ENCODE measurements at regions of chr5 and their contacts with region 1.

Region 1: DNA sequence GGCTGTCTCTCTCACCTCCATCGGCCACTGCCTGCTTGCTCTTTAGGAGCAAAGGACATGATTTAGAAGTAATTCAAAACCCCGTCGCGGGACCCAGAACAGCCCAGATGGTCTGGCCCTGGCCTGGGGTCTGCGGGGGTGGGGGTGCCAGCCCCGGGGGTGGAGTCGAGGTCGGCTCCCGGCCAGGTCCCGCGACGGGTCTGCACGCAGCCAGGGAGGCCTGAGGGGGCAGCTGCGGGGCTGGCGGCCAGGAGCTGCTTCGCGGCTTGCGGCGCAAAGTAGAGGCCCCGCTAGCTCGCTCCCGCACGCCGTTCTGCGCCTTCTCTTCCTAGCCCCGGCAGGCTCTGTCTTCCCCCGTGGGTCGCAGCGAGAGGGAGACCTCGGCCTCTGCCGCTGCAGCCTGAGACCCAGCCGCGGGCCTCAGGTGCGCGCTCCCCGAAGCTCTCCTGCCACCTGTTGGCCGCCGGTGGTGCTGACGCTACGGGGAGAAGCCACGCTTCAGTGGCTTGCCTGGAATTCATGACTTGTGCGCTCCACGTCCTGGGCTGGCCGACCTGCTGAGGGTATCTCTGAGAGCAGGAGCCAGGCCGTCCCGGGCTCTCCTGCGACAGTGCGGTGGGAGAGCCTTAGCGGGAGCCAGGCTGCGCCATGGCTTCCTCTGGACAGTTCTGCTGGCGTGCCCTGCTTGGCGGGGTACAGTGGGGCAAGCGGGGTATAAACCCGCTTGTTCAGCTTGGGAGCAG is 157.2 kb upstream of the PITX1 start:
- DNase-seq: peak; percentile 73
- H3K4me3 ChIP-seq: peak overlapping the region; percentile 26 to 28
- H3K27ac ChIP-seq: peak overlapping the region; percentile 28 to 69
- H3K4me1 ChIP-seq: no peaks in the 10 kb centered on the region
- H3K27me3 ChIP-seq: no peaks in the 10 kb centered on the region
- CTCF ChIP-seq: peak; percentile 74 to 96 (median 88)
- POLR2A ChIP-seq: no peak

Region 2: DNA sequence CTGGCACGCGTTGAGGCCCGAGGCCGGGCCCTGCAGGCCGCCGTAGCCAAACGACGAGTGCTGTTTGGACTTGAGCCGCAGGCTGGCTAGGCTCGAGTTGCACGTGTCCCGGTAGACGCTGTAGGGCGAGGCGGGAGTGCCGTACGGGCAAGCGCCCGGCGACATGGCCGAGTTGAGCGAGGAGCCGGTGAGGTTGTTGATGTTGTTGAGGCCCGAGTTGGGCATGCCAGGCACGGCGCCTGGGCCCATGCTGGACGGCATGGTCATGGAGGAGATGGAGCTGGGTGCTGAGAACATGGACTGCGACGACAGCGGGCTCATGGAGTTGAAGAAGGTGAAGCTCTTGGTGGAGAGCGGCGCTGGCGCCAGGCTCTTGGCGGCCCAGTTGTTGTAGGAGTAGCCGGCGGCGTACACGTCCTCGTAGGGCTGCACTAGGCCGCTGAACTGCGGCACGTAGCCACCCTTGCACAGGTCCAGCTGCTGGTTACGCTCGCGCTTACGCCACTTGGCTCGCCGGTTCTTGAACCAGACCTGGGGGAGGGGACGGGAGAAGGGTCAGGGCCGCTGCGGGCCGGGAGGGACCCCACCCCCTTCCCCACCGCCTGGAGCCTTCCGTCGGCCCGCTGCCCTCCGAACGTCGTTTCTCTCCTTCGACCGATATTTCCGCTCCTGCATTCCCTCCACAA is 162.3 kb before region 1 on chr5:
- intact Hi-C with region 1: loop called (anchors 2 kb)
- DNase-seq: no peak
- H3K4me3 ChIP-seq: no peak overlapping the region
- H3K27ac ChIP-seq: no peak overlapping the region
- H3K4me1 ChIP-seq: no peaks in the 10 kb centered on the region
- H3K27me3 ChIP-seq: peaks cover 5% of the 10 kb centered on the region
- CTCF ChIP-seq: no peak
- POLR2A ChIP-seq: no peak

Measured in prostate gland (tissue), 2 donors.